ENCODE measurements at regions of chr11 and their contacts with region 1.

Region 1: DNA sequence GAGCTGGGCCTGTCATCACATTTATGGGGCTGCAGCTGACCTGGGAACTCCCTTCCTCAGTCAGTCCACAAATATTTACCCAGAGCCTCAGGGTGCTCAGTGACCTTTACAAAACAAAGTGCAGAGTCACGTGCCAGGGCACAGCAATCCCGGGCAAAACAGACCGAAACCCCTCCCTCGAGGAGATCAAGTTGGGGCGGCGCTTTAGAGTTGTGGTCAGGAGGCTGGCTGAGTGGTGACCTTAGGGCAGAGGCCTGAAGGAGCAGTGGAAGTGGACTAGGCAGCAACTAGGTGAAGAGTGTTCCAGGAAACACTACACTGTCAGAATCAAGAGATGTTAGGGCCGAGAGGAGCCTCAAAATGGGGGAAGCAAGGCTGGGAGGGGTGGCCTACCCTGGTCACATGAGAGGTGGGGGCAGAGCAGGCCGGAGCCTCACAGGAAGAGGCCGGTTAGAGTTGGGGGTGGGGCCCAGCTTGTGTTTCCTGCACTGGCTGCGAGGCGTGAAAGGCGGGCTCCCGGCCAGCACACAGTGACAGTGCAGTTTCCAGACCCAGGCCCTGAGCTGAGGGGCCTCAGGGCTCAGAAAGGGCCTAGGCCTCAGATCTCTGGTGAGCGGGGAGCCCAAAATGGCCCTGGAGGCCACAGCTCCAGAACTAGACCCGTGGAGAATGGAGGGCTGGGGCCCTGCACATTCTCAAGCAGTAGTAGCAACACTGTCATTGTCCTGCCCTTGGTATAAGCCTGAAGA is 3.7 kb upstream of the NEAT1 start:
- DNase-seq: peak; percentile 98
- H3K4me3 Mint-ChIP-seq: peak overlapping the region; percentile 63
- H3K27ac Mint-ChIP-seq: peak overlapping the region; percentile 99
- H3K4me1 Mint-ChIP-seq: peaks cover 34% of the 10 kb centered on the region
- H3K27me3 Mint-ChIP-seq: peaks cover 10% of the 10 kb centered on the region
- CTCF ChIP-seq: no peak

Region 2: DNA sequence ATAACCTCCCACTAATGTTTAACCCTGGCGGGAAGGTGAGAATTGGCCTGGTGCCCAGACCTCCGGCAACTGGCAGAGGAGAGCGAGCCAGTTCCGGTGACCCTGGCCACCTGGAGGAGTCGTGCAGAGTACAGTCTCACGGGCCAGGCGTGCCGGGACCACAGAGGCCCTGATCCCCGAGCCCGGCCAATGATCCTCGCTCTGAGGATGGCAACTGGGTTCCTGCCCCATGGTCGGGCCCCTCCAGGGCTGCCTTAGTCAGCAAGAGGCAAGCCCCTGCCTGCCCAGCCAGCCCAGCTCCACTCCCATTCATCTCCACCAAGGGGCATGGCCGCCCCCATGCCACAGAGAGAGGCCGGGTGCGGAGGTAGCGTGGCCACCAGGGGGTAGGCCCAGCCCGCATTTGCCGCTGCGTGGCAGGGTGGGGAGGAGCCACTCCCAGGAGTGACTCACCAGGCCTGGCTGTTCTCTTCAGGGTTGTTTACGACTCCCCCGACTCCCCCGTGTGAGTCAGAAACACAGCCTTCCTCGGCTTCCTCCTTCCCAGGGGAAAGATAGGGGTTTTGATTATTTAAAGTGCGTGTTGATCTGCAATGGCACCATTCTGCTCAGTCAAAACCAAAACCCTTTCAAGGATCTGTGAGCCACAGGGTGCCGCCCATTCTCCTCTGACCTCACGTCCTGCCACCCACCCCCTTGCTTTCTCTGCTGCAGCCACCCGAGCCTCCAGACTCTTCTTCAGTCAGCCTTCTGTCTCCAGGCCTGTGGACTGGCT is 36.7 kb before region 1 on chr11 and contains the start of gene SLC25A45:
- CTCF ChIA-PET with region 1: interaction called, 47 read pairs
- POLR2A ChIA-PET with region 1: interaction called, 426 read pairs
- intact Hi-C with region 1: loop called (anchors 1 kb)
- DNase-seq: peak; percentile 99
- H3K4me3 Mint-ChIP-seq: peak within 1 kb of the TSS; percentile 68
- H3K27ac Mint-ChIP-seq: peak within 1 kb of the TSS; percentile 97
- H3K4me1 Mint-ChIP-seq: peaks cover 26% of the 10 kb centered on the region
- H3K27me3 Mint-ChIP-seq: no peaks in the 10 kb centered on the region
- CTCF ChIP-seq: peak; percentile 86
- total RNA-seq, gene SLC25A45: 3.9 and 4.9 TPM in 2 replicates

Region 3: DNA sequence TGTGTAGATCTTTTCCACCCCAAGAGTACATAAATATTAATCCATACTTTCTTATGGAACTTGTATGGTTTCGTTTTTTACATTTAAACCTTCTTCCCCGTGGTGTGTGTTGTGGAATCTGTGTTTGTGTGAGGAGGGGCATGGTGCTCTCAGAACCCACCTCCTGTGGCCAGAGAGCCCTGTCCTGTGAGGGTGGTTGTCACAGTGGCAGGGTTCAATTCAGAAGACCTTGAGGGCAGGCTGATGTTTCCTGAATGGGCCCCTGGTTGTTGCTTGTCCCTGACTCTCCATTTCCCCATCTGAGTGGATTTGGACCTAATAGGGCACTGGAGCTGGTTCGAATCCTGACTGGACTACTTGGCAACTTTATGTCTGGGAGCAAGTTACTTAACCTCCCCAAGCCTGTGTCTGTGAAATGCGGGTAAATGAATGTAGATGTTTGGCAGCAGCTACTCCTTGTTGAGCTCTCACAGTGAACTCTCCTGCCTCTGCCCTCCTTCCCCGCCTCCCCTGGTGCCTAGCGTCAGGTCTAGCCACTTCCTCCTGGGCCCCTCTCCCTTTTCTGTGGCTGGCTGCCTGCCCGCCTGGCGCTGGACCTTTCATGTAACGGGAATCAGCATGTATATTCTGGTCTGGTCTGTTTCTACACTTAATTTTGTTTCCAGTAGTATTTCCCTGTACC is 11.0 kb after region 1 on chr11:
- CTCF ChIA-PET with region 1: interaction called, 6 read pairs
- POLR2A ChIA-PET with region 1: interaction called, 390 read pairs
- intact Hi-C with region 1: loop called (anchors 2 kb)
- DNase-seq: peak; percentile 83
- H3K4me3 Mint-ChIP-seq: peak overlapping the region; percentile 98
- H3K27ac Mint-ChIP-seq: peak overlapping the region; percentile 62
- H3K4me1 Mint-ChIP-seq: peaks cover 49% of the 10 kb centered on the region
- H3K27me3 Mint-ChIP-seq: no peaks in the 10 kb centered on the region
- CTCF ChIP-seq: no peak

Region 4: DNA sequence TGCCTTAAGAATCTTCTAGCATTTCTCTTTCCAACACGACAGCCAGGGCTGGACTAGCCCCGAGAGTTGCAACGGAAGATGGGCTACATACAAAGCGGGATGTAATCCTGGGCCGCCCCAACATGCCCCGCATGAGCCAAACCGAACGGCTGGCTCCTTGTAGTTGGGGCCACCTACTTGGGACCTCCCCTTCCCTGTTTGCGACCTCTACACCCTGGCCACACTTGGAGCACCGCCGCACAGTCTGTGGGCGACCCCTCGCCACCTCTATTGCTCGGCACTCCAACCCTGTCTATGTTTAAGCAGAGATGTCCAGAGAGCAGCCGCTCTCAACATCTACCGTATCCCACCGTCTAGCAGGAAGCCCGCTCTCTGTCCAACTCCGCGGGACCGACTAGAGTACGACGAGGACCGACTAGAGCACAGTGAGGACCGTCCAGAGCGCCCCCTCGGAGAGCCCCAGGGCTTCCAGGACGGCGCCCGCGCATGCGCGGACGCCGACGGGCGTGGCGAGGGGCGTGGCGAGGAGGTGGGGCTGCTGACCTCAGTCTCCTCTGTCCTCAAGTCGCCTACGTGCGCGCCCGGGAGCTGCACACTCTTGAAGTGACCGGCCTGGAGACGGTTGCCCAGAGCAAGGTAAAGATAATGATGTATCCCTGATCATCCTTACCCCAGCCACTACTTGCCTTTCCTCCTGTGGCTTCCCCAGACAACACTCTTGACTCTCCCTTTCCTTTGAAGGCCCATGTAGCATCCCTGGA is 36.0 kb after region 1 on chr11:
- CTCF ChIA-PET with region 1: interaction called, 6 read pairs
- POLR2A ChIA-PET with region 1: interaction called, 391 read pairs
- intact Hi-C with region 1: no loop called
- DNase-seq: no peak
- H3K4me3 Mint-ChIP-seq: peak overlapping the region; percentile 66
- H3K27ac Mint-ChIP-seq: peak overlapping the region; percentile 27
- H3K4me1 Mint-ChIP-seq: peaks cover 9% of the 10 kb centered on the region
- H3K27me3 Mint-ChIP-seq: no peaks in the 10 kb centered on the region
- CTCF ChIP-seq: no peak

Region 5: GRCh38 chr11:65477149-65477965 is 58.5 kb after region 1 on chr11:
- CTCF ChIA-PET with region 1: interaction called, 6 read pairs
- POLR2A ChIA-PET with region 1: interaction called, 373 read pairs
- intact Hi-C with region 1: no loop called
- DNase-seq: peak; percentile 96
- H3K4me3 Mint-ChIP-seq: peak overlapping the region; percentile 95
- H3K27ac Mint-ChIP-seq: peak overlapping the region; percentile 95
- H3K4me1 Mint-ChIP-seq: peaks cover 16% of the 10 kb centered on the region
- H3K27me3 Mint-ChIP-seq: no peaks in the 10 kb centered on the region
- CTCF ChIP-seq: no peak

Region 6: DNA sequence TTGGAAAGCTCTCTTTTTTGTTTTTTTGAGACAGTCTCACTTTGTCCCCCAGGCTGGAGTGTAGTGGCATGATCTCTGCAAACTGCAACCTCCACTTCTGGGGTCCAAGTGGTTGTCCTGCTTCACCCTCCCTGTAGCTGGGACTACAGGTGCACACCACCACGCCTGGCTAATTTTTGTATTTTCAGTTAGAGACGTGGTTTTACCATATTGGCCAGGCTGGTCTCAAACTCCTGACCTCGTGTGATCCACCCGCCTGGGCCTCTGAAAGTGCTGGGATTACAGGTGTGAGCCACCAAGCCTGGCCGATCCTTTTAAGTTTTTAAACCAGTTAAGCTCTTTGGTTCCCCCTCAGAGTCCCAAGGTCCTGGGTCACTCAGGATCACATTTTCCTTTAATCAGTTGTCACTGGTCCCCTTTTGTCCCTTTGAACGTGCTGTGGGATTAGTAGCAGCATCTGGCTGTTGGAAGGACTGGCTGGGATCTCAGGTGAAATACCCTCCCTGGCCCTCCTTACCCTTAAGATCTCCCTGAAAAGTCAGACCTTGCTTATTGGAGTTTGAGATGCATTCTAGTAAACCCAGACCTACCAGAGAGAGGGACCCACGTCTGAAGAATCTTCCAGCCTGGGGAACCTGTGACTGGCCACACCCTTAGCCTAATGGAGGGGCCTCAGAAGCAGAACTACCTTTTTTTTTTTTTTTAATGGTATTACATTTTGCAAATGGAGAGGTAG is 88.1 kb after region 1 on chr11:
- CTCF ChIA-PET with region 1: interaction called, 41 read pairs
- POLR2A ChIA-PET with region 1: interaction called, 2,994 read pairs
- intact Hi-C with region 1: loop called (anchors 1 kb)
- DNase-seq: peak; percentile 70
- H3K4me3 Mint-ChIP-seq: no peak overlapping the region
- H3K27ac Mint-ChIP-seq: no peak overlapping the region
- H3K4me1 Mint-ChIP-seq: peaks cover 22% of the 10 kb centered on the region
- H3K27me3 Mint-ChIP-seq: no peaks in the 10 kb centered on the region
- CTCF ChIP-seq: no peak

Region 7: DNA sequence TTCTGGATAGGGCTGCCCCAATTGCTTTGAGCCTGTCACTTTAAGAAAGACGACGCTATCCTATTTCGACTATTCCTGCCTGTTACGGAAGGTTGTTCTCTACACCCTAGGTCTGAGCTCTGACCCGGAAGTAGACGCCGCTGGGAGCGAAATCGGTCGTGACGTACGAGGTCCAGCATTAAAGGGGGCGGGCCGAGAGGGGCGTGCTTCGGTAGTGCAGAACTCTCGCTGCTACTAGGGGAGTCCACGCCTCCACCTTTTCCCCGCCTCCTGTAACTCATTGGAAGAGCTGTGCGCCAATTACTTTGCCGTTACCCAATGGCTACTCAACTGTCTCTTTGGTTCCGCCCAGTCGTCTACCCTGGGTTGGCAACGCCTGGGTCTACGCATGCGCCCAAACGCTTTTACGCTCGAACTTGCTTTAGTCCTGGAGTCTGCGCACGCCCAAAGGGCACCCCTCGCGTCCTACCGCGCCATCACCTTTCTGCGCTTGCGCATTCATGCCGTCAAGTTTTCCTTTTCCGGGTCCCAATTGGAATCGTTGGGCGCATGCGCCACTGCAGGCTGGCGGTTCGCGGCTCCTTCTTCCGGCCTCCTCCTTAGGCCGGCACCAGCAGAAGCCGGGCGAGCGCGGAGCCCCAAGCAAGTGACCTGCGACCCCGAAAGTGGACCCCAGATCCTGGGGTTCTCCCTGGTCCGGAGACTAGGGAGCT is 196.5 kb after region 1 on chr11 and contains the start of gene PCNX3:
- CTCF ChIA-PET with region 1: no interaction called
- POLR2A ChIA-PET with region 1: interaction called, 13 read pairs
- intact Hi-C with region 1: no loop called
- DNase-seq: peak; percentile 100
- H3K4me3 Mint-ChIP-seq: peak within 1 kb of the TSS; percentile 91
- H3K27ac Mint-ChIP-seq: peak within 1 kb of the TSS; percentile 96
- H3K4me1 Mint-ChIP-seq: peaks cover 26% of the 10 kb centered on the region
- H3K27me3 Mint-ChIP-seq: no peaks in the 10 kb centered on the region
- CTCF ChIP-seq: no peak
- total RNA-seq, gene PCNX3: 40.9 and 45.8 TPM in 2 replicates

Region 8: DNA sequence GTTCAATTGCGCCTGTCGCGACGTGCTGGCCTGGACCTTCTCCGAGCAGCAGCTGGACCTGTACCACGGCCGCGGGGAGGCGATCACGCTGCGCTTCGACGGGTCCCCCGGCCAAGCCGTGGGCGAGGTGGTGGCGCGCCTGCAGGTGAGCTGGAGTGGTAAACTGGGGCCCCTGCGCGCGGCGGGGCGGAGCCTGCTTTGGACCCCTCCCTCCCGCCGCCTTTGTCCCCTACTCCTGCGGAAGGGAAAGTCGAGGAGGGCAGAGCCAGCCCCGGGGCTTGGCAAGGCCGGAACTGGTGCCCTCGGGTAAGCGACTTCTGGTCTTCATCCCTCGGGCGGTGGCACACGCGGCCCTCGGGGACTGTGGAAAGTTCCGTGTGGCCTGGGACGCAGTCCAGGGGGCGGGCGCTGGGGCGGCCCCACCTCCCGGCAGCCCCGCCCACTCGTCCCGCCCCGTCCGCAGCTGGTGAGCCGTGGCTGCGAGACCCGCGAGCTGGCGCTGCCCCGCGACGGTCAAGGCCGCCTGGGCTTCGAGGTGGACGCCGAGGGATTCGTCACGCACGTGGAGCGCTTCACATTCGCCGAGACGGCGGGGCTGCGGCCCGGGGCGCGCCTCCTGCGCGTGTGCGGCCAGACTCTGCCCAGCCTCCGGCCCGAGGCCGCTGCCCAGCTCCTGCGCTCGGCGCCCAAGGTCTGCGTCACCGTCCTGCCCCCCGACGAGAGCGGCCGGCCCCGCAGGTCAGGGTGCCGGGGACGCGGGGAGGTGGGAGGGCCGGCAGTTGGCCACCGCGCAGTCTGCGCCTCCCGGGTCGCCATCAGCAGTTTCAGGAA is 228.3 kb after region 1 on chr11:
- CTCF ChIA-PET with region 1: no interaction called
- POLR2A ChIA-PET with region 1: no interaction called
- intact Hi-C with region 1: no loop called
- DNase-seq: no peak
- H3K4me3 Mint-ChIP-seq: peak overlapping the region; percentile 55
- H3K27ac Mint-ChIP-seq: no peak overlapping the region
- H3K4me1 Mint-ChIP-seq: peaks cover 17% of the 10 kb centered on the region
- H3K27me3 Mint-ChIP-seq: no peaks in the 10 kb centered on the region
- CTCF ChIP-seq: no peak

Region 9: GRCh38 chr11:65685981-65686380 is 267.1 kb after region 1 on chr11:
- CTCF ChIA-PET with region 1: no interaction called
- POLR2A ChIA-PET with region 1: no interaction called
- intact Hi-C with region 1: no loop called
- DNase-seq: no peak
- H3K4me3 Mint-ChIP-seq: no peak overlapping the region
- H3K27ac Mint-ChIP-seq: no peak overlapping the region
- H3K4me1 Mint-ChIP-seq: no peaks in the 10 kb centered on the region
- H3K27me3 Mint-ChIP-seq: peaks cover 16% of the 10 kb centered on the region
- CTCF ChIP-seq: no peak

Region 10: GRCh38 chr11:65698205-65698604 is 279.3 kb after region 1 on chr11:
- CTCF ChIA-PET with region 1: no interaction called
- POLR2A ChIA-PET with region 1: no interaction called
- intact Hi-C with region 1: no loop called
- DNase-seq: no peak
- H3K4me3 Mint-ChIP-seq: no peak overlapping the region
- H3K27ac Mint-ChIP-seq: no peak overlapping the region
- H3K4me1 Mint-ChIP-seq: no peaks in the 10 kb centered on the region
- H3K27me3 Mint-ChIP-seq: peaks cover 55% of the 10 kb centered on the region
- CTCF ChIP-seq: no peak

Measured in MCF 10A (cell line).